ENCODE measurements at regions of chr3 and their contacts with region 1.

Region 1: GRCh38 chr3:128123538-128124368 is at the start of gene RUVBL1:
- DNase-seq: peak; percentile 95
- H3K4me3 ChIP-seq: peak within 1 kb of the TSS; percentile 78 to 79
- H3K27ac ChIP-seq: peak within 1 kb of the TSS; percentile 40 to 44
- H3K4me1 ChIP-seq: no peaks in the 10 kb centered on the region
- H3K27me3 ChIP-seq: no peaks in the 10 kb centered on the region
- CTCF ChIP-seq: peak in 2 of 4 experiments; percentile 2 to 15
- POLR2A ChIP-seq: no peak
- total RNA-seq, gene RUVBL1: 24.0 to 28.1 TPM

Region 2: DNA sequence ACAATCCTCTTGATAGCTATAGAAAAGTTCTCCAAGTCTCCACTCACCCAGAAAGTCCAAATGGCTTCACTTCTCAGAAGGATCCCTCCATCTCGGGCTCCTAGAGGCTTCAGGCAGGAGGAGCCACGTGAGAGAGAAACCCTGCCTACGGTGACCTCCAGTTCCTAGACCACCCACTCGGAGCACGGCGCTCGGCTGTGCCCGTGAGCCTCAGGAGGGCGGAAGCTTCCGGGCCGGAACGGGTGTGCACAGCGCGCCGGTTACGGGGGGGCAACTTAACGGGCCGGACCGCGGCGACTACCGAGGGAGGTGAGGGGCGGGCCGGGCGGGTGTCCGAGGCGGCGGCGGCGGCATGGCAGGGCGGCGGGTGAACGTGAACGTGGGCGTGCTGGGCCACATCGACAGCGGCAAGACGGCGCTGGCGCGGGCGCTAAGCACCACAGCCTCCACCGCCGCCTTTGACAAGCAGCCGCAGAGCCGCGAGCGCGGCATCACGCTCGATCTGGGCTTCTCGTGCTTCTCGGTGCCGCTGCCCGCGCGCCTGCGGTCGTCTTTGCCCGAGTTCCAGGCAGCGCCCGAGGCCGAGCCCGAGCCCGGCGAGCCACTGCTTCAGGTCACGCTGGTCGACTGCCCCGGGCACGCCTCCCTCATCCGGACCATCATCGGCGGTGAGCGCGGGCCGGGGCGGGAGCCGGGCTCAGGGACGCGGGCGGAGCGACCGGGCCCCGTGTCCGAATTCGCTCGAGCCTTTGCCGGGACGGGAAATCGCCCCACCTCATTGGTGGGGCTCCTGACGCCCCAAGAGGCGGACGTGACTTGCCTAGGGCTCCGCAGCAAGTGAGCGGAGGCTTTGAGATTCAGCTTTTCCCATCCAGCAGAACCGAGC is 29.6 kb after region 1 on chr3 and contains the start of gene EEFSEC:
- intact Hi-C with region 1: loop called (anchors 2 kb)
- DNase-seq: peak; percentile 55
- H3K4me3 ChIP-seq: peak within 1 kb of the TSS; percentile 85 to 93
- H3K27ac ChIP-seq: peak within 1 kb of the TSS; percentile 80 to 82
- H3K4me1 ChIP-seq: no peaks in the 10 kb centered on the region
- H3K27me3 ChIP-seq: no peaks in the 10 kb centered on the region
- CTCF ChIP-seq: peak in 2 of 4 experiments; percentile 6 to 18
- POLR2A ChIP-seq: no peak
- total RNA-seq, gene EEFSEC: 24.7 to 26.1 TPM

Region 3: DNA sequence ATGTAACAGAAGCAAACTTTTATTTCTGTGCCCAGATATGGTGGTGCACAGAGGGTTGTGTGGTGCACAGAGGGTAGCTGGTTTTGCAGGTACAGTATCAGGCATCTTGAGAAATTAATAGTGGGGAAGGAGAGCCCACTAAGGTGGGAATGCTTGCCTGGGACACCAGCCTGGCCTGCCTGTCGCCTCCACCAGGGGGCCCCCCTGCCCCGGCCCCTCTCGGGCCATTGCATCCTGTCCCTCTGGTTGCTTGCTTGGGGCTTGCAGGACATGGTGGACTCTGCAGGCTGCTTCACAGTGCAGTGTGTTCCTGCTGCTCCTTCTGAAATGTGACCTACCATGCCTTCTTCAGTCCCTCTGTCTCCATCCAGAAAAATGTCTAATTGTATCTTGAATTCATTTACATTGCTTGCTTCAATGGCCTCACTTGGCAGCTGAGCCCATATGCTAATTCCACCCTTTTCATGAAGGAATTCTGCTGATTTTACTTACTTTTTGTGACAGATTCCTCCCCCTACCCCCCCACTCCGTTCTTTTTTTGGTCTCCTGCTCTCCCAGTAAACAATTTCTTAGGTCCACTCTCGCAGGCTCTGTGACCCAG is 103.1 kb after region 1 on chr3:
- intact Hi-C with region 1: no loop called
- DNase-seq: no peak
- H3K4me3 ChIP-seq: no peak overlapping the region
- H3K27ac ChIP-seq: no peak overlapping the region
- H3K4me1 ChIP-seq: peaks cover 4% of the 10 kb centered on the region
- H3K27me3 ChIP-seq: no peaks in the 10 kb centered on the region
- CTCF ChIP-seq: peak in 3 of 4 experiments; percentile 30 to 53 (median 42)
- POLR2A ChIP-seq: no peak

Measured in prostate gland (tissue), 2 donors.